ENCODE measurements at regions of chr10 and their contacts with region 1.

Region 1: DNA sequence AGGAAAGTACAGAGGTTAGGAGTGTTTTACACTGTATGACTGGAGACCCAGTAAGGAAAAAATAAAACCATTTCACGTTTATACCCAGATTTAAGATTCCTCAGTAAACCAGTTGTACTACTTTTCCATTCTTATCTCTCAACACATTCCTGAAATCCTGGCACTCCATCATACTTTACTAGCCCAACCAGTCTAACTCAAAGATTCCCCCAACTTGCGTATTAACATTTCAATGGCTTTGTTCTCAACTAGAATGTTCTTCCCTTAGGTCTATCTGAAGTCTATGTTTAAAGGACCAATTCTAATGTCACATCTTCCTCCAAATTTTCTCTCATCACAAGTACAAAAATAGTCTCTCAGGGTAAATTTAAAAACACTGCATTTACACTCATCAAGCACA is 7.9 kb downstream of the CCDC186 start:
- DNase-seq: peak in 1 of 2 experiments; percentile 86
- H3K4me3 ChIP-seq: no peak overlapping the region; the same call in 1 of the 2 replicates
- H3K27ac ChIP-seq: peak overlapping the region; percentile 58
- H3K4me1 ChIP-seq: peaks cover 22% of the 10 kb centered on the region
- H3K27me3 ChIP-seq: no peaks in the 10 kb centered on the region
- CTCF ChIP-seq: no peak

Region 2: GRCh38 chr10:114541081-114541796 is 375.2 kb after region 1 on chr10:
- CTCF ChIA-PET with region 1: no interaction called
- POLR2A ChIA-PET with region 1: interaction called, 12 read pairs
- intact Hi-C with region 1: no loop called
- DNase-seq: peak; percentile 39 to 51
- H3K4me3 ChIP-seq: no peak overlapping the region
- H3K27ac ChIP-seq: no peak overlapping the region
- H3K4me1 ChIP-seq: peaks cover 16% of the 10 kb centered on the region
- H3K27me3 ChIP-seq: no peaks in the 10 kb centered on the region
- CTCF ChIP-seq: no peak